PC-3 (cell line): ENCODE measurements at regions of chr6 and their contacts with region 1.

Region 1: DNA sequence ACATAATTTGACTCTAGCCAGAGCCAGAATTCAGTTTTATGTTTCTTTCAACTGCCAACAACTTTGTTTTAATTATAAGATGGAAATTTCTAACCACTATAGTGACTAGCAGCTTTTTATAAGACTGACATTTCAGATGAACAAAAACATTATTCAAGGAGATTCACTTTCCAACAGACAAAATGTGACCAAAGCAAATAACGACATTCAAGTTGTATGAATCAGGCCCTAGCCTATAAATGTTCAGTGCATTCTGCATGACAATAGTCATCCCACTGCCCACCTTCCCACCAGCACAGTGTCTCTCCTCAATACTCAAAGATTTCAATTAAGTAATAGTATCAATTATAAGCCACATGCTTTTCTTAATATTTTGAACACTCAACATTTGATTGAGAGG is 200.7 kb downstream of the KHDC1L start:
- DNase-seq: peak; percentile 74
- ATAC-seq: peak; percentile 72
- H3K4me3 ChIP-seq: no peak overlapping the region
- H3K27ac ChIP-seq: peak overlapping the region; percentile 73
- H3K4me1 ChIP-seq: peaks cover 39% of the 10 kb centered on the region
- H3K27me3 ChIP-seq: no peaks in the 10 kb centered on the region
- CTCF ChIP-seq: no peak

Region 2: GRCh38 chr6:72977114-72977513 is 47.5 kb before region 1 on chr6:
- CTCF ChIA-PET with region 1: no interaction called
- POLR2A ChIA-PET with region 1: no interaction called
- intact Hi-C with region 1: loop called (anchors 2 kb)
- DNase-seq: peak; percentile 55
- ATAC-seq: peak; percentile 78
- H3K4me3 ChIP-seq: no peak overlapping the region
- H3K27ac ChIP-seq: no peak overlapping the region
- H3K4me1 ChIP-seq: peaks cover 32% of the 10 kb centered on the region
- H3K27me3 ChIP-seq: no peaks in the 10 kb centered on the region
- CTCF ChIP-seq: no peak

Region 3: DNA sequence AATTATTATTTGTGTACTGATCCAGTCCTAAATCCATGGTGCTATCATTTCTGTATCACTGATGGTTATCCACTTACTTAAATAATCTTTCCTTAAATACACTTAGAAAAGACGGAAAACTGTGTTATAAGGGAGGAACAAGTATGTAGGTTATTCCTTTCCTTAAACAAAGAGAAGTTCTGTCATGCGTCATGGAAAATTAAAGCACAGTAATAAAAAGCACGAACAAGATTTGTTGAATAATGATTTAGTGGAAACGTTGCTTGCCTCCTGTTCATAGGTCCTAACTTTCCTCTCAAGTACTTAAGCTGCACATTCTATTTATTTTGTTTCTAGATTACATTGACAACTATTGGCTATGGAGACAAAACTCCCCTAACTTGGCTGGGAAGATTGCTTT is 80.3 kb after region 1 on chr6:
- CTCF ChIA-PET with region 1: no interaction called
- POLR2A ChIA-PET with region 1: no interaction called
- intact Hi-C with region 1: no loop called
- DNase-seq: no peak
- ATAC-seq: no peak
- H3K4me3 ChIP-seq: no peak overlapping the region
- H3K27ac ChIP-seq: no peak overlapping the region
- H3K4me1 ChIP-seq: no peaks in the 10 kb centered on the region
- H3K27me3 ChIP-seq: no peaks in the 10 kb centered on the region
- CTCF ChIP-seq: no peak

Region 4: GRCh38 chr6:73139681-73140383 is 115.2 kb after region 1 on chr6:
- CTCF ChIA-PET with region 1: no interaction called
- POLR2A ChIA-PET with region 1: no interaction called
- intact Hi-C with region 1: no loop called
- DNase-seq: no peak
- ATAC-seq: no peak
- H3K4me3 ChIP-seq: no peak overlapping the region
- H3K27ac ChIP-seq: no peak overlapping the region
- H3K4me1 ChIP-seq: no peaks in the 10 kb centered on the region
- H3K27me3 ChIP-seq: no peaks in the 10 kb centered on the region
- CTCF ChIP-seq: no peak